Tibial artery (tissue), 4 donors: ENCODE measurements at regions of chr6 and their contacts with region 1.

Region 1: DNA sequence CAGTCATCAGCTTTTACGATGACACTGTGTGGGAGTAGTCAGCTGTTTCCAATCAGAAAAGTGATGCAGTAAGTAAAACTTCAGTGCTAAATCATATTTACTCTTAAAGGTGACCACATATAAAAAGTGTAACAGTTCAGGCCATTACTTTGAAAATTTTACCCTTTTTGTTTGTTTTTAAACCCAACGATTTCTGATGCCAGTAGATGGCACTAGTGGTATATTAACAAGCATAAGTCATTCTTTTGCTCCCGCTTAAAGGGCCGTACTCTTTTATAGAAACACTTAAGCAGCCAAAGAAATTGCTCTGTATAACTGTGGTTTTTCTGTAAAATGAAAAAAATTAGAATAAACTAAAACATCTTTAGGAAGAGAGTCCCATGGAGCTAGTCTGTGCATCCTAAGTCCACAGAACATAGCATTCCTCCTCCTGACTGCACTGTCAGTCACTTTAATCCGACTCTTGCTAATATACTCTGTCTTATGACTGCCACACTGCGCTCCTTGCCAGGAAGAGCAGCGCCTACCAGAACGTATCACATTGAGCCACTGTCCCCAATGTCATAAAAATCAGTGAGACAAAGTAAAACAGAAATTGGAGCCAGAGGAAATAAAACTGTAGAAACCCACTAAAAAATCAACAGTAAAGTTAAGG is 25.0 kb downstream of the HEBP2 start:
- DNase-seq: no peak
- H3K4me3 ChIP-seq: no peak overlapping the region
- H3K27ac ChIP-seq: no peak overlapping the region
- H3K4me1 ChIP-seq: no peaks in the 10 kb centered on the region
- H3K27me3 ChIP-seq: no peaks in the 10 kb centered on the region
- CTCF ChIP-seq: peak; percentile 46 to 51

Region 2: DNA sequence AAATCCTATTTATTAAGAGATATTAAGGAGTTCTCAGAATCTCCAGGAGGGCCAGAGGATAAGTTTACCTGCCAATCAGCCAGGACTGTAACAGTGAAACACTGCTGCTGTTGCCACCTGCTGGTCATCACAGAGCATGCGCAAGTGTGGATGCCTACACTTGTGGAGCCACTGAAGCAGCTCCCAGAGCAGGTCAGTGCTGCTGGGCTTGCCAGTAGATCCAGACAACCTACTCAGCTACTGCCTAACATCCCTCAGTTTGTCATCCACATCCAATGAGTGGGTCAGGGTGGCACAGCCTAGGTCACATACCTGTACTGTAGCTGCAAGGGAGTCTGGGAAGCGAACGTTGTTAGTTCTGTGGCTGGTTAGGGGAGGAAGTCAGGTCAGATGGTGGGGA is 88.6 kb after region 1 on chr6:
- intact Hi-C with region 1: loop called (anchors 5 kb)
- DNase-seq: no peak
- H3K4me3 ChIP-seq: no peak overlapping the region
- H3K27ac ChIP-seq: no peak overlapping the region
- H3K4me1 ChIP-seq: no peaks in the 10 kb centered on the region
- H3K27me3 ChIP-seq: no peaks in the 10 kb centered on the region
- CTCF ChIP-seq: peak; percentile 39 to 52

Region 3: GRCh38 chr6:138588805-138589434 is 159.8 kb after region 1 on chr6:
- intact Hi-C with region 1: loop called (anchors 5 kb)
- DNase-seq: peak; percentile 60 to 73
- H3K4me3 ChIP-seq: no peak overlapping the region
- H3K27ac ChIP-seq: no peak overlapping the region
- H3K4me1 ChIP-seq: peaks cover 0 to 4% (median 0%) of the 10 kb centered on the region in 4 donors
- H3K27me3 ChIP-seq: no peaks in the 10 kb centered on the region
- CTCF ChIP-seq: peak; percentile 84 to 86